ENCODE measurements at regions of chr17 and their contacts with region 1.

Region 1: GRCh38 chr17:5780476-5780875 is 196.2 kb upstream of the NLRP1 start:
- DNase-seq: peak; percentile 82
- H3K4me3 Mint-ChIP-seq: no peak overlapping the region
- H3K27ac Mint-ChIP-seq: peak overlapping the region; percentile 9
- H3K4me1 Mint-ChIP-seq: peaks cover 36% of the 10 kb centered on the region
- H3K27me3 Mint-ChIP-seq: no peaks in the 10 kb centered on the region
- CTCF ChIP-seq: peak; percentile 22

Region 2: DNA sequence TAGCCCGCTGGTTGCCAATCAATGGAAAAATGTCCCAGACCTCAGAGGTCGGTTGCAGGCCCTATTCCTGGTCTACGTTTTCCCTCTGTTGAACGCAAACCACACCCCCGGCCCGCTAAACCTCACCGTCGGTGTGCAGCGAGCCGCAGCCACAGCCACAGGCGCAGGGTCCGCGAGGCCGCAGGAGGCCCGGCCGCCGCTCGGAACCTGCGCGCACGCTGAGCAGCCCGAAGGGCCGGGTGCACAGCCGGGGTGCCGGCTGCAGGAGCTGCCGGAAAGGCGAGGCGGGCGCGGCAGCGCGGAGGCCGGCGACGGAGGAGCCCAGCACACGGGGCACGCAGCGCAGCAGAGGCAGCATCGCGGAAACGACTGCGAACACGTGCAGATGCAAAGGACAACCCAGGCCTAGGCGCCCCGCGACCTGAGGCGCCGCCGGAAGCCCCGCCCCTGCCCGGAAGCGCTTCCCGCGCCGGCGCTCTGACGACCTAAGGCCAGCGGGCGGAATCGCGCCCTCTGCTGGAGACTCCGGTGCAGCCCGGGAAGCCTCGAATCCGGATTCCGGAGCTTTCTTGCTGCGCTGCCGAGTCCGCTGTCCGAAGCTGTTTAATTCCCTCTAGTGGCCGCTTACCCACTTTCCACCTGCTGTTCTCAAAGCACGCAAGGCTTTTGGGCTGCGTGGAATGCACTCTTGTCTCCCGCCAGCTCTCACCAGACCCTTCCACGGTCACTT is 341.6 kb before region 1 on chr17 and contains the start of gene C1QBP:
- CTCF ChIA-PET with region 1: no interaction called
- POLR2A ChIA-PET with region 1: no interaction called
- intact Hi-C with region 1: no loop called
- DNase-seq: peak; percentile 91
- H3K4me3 Mint-ChIP-seq: peak within 1 kb of the TSS; percentile 71
- H3K27ac Mint-ChIP-seq: peak within 1 kb of the TSS; percentile 46
- H3K4me1 Mint-ChIP-seq: peaks cover 16% of the 10 kb centered on the region
- H3K27me3 Mint-ChIP-seq: no peaks in the 10 kb centered on the region
- CTCF ChIP-seq: peak; percentile 99
- total RNA-seq, gene C1QBP: 386 and 438 TPM in 2 replicates

Region 3: GRCh38 chr17:5706577-5707216 is 73.8 kb before region 1 on chr17:
- CTCF ChIA-PET with region 1: no interaction called
- POLR2A ChIA-PET with region 1: no interaction called
- intact Hi-C with region 1: loop called (anchors 5 kb)
- DNase-seq: peak; percentile 62
- H3K4me3 Mint-ChIP-seq: no peak overlapping the region
- H3K27ac Mint-ChIP-seq: no peak overlapping the region
- H3K4me1 Mint-ChIP-seq: no peaks in the 10 kb centered on the region
- H3K27me3 Mint-ChIP-seq: peaks cover 42% of the 10 kb centered on the region
- CTCF ChIP-seq: peak; percentile 50

Region 4: GRCh38 chr17:5832886-5833285 is 52.4 kb after region 1 on chr17:
- CTCF ChIA-PET with region 1: no interaction called
- POLR2A ChIA-PET with region 1: interaction called, 3 read pairs
- intact Hi-C with region 1: loop called (anchors 2 kb)
- DNase-seq: peak; percentile 64
- H3K4me3 Mint-ChIP-seq: no peak overlapping the region
- H3K27ac Mint-ChIP-seq: peak overlapping the region; percentile 92
- H3K4me1 Mint-ChIP-seq: peaks cover 41% of the 10 kb centered on the region
- H3K27me3 Mint-ChIP-seq: no peaks in the 10 kb centered on the region
- CTCF ChIP-seq: no peak

Region 5: GRCh38 chr17:5921512-5922282 is 141.2 kb after region 1 on chr17:
- CTCF ChIA-PET with region 1: no interaction called
- POLR2A ChIA-PET with region 1: no interaction called
- intact Hi-C with region 1: no loop called
- DNase-seq: peak; percentile 73
- H3K4me3 Mint-ChIP-seq: no peak overlapping the region
- H3K27ac Mint-ChIP-seq: no peak overlapping the region
- H3K4me1 Mint-ChIP-seq: no peaks in the 10 kb centered on the region
- H3K27me3 Mint-ChIP-seq: peaks cover 38% of the 10 kb centered on the region
- CTCF ChIP-seq: no peak